A549 (cell line): ENCODE measurements at regions of chr11 and their contacts with region 1.

Region 1: GRCh38 chr11:17230867-17231851 is 23.4 kb upstream of the PIK3C2A start:
- DNase-seq: no peak
- ATAC-seq: no peak
- H3K4me3 ChIP-seq: no peak overlapping the region
- H3K27ac ChIP-seq: no peak overlapping the region
- H3K4me1 ChIP-seq: no peaks in the 10 kb centered on the region
- CTCF ChIP-seq: no peak
- EP300 ChIP-seq: no peak
- POLR2A ChIP-seq: no peak
- RAD21 ChIP-seq: no peak

Region 2: DNA sequence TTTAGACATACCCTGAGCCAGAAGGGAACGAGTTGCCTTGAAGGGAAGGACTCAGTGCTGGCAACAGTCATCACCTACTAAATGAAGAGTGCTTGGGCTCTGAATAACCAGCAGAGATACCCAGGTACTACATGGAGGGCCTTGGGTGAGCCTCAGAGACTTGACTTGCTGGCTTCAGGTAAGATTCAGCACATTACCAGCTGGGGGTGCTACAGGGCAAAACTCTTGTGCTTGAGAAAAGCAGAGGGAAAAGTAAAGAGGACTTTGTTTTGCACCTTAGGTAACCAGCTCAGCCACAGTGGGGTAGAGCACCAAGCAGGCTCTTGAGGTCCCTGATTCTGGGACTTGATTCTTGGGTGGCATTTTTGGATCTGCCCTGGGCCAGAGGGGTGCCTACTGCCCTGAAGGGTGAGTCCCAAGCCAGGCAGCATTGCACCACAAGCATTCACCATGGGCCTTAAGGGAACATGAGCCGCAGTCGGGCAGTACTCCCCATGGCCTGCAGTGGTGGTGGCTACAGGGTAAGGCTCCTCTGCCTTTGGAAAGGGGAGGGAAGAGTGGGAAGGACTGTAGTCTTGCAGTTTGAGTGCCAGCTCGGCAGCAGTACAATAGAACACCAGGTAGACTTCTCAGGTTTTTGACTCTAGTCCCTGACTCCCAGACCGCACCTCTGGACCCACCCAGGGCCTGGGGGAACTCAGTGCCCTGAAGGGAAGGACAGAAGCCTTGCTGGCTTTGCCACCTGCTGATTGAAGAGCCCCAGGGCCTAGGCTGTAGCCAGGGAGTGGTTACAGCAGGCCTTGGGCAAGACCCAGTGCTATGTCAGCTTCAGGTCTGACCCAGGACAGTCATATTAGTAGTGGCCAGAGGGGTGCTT is 194.3 kb before region 1 on chr11:
- CTCF ChIA-PET with region 1: no interaction called
- POLR2A ChIA-PET with region 1: no interaction called
- DNase-seq: peak in 1 of 2 experiments; percentile 35
- ATAC-seq: peak; percentile 34 to 65; a peak in 4 of 6 replicates
- H3K4me3 ChIP-seq: no peak overlapping the region
- H3K27ac ChIP-seq: no peak overlapping the region
- H3K4me1 ChIP-seq: no peaks in the 10 kb centered on the region
- CTCF ChIP-seq: no peak
- EP300 ChIP-seq: no peak
- POLR2A ChIP-seq: no peak
- RAD21 ChIP-seq: no peak; a peak in 1 of 5 replicates

Region 3: GRCh38 chr11:17207317-17208258 is 23.6 kb before region 1 on chr11 and contains the start of gene PIK3C2A:
- CTCF ChIA-PET with region 1: interaction called, 12 read pairs
- POLR2A ChIA-PET with region 1: no interaction called
- DNase-seq: peak; percentile 95
- ATAC-seq: peak; percentile 95 to 96
- H3K4me3 ChIP-seq: peak within 1 kb of the TSS; percentile 96
- H3K27ac ChIP-seq: peak within 1 kb of the TSS; percentile 88 to 95
- H3K4me1 ChIP-seq: peaks cover 23% of the 10 kb centered on the region
- CTCF ChIP-seq: no peak
- EP300 ChIP-seq: no peak
- POLR2A ChIP-seq: peak; percentile 94
- RAD21 ChIP-seq: no peak
- polyA plus RNA-seq, gene PIK3C2A: 35.9 and 51.0 TPM in 2 replicates

Region 4: GRCh38 chr11:17250561-17251350 is 19.6 kb after region 1 on chr11:
- CTCF ChIA-PET with region 1: interaction called, 14 read pairs
- POLR2A ChIA-PET with region 1: no interaction called
- DNase-seq: no peak
- ATAC-seq: peak in 1 of 2 experiments; percentile 65; a peak in 3 of 6 replicates
- H3K4me3 ChIP-seq: no peak overlapping the region
- H3K27ac ChIP-seq: no peak overlapping the region
- H3K4me1 ChIP-seq: no peaks in the 10 kb centered on the region
- CTCF ChIP-seq: no peak
- EP300 ChIP-seq: no peak
- POLR2A ChIP-seq: no peak
- RAD21 ChIP-seq: no peak

Region 5: DNA sequence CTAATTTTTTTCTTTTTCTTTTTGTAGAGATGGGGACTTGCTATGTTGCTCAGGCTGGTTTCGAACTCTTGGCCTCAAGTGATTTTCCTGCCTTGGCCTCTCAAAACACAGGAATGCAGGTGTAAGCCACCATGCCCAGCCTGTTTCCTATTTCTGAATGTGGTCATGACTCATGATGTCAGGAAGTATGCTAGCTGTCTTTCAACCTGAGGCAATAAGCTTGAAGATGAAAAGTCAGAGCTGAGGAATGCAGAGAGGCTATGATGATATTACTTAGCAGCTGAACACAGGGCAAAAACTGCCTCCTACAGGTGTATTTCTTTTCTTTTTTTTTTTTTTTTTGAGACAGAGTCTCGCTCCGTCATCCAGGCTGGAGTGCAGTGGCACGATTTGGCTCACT is 36.4 kb after region 1 on chr11:
- CTCF ChIA-PET with region 1: interaction called, 12 read pairs
- POLR2A ChIA-PET with region 1: no interaction called
- DNase-seq: peak; percentile 86 to 87
- ATAC-seq: peak; percentile 90 to 99
- H3K4me3 ChIP-seq: no peak overlapping the region
- H3K27ac ChIP-seq: peak overlapping the region in 1 of 2 experiments; percentile 59; a peak in 2 of 6 replicates
- H3K4me1 ChIP-seq: peaks cover 7% of the 10 kb centered on the region; the same call in 1 of the 3 replicates
- CTCF ChIP-seq: peak; percentile 27; the same call in 1 of the 3 replicates
- EP300 ChIP-seq: no peak
- POLR2A ChIP-seq: no peak
- RAD21 ChIP-seq: peak; percentile 28 to 33; a peak in 2 of 5 replicates

Region 6: GRCh38 chr11:17528181-17528691 is 297.1 kb after region 1 on chr11:
- CTCF ChIA-PET with region 1: interaction called, 13 read pairs
- POLR2A ChIA-PET with region 1: no interaction called
- DNase-seq: peak; percentile 42 to 88
- ATAC-seq: peak; percentile 89 to 97
- H3K4me3 ChIP-seq: no peak overlapping the region
- H3K27ac ChIP-seq: no peak overlapping the region
- H3K4me1 ChIP-seq: peaks cover 6% of the 10 kb centered on the region; the same call in 2 of the 3 replicates
- CTCF ChIP-seq: peak; percentile 79
- EP300 ChIP-seq: no peak
- POLR2A ChIP-seq: no peak
- RAD21 ChIP-seq: peak; percentile 74 to 77